HepG2 (cell line): ENCODE measurements at regions of chr1 and their contacts with region 1.

Region 1: DNA sequence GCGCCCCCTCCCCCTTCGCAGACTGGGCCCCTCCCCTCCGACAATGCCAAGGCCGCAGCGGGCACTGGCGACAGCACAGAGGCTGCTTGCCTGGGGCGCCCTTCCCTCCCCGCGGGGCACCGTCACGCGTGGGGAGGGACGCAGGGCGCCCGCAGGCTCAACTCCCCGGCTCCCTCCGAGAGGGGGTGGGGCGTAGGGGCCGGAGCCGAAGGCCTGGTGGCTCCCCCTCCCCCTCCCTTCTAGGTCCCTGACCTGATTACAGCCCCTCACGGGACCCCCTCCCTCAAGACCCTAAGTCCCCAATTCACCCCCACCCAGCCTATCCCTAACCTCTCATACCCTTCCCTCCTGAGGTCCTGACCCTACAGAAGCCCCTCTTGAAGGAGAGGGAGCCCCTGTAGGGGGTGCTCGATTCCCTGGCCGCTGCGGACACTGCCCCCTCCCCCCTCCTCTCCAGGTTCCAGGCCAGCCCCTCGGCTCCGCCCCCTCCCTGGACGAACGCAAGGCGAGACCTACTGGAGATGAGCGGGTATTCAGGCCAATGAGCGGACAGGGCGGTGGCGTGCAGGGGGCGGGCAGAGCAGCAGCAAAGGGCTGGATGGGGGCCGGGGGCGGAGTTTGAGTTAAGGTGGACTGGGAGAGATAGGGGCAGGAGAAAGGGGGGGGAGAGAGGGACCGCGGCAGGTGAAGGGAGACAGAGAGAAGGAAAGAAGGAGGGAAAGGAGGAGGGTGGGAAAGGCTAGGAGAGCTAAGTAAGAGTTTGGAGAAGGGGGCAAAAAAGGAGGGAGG is 733 bp upstream of the ZBTB7B start:
- DNase-seq: peak; percentile 97
- ATAC-seq: peak; percentile 70
- H3K4me3 ChIP-seq: peak overlapping the region; percentile 70 to 86 (median 84)
- H3K27ac ChIP-seq: peak overlapping the region; percentile 97
- H3K4me1 ChIP-seq: peaks cover 43% of the 10 kb centered on the region
- H3K27me3 ChIP-seq: no peaks in the 10 kb centered on the region; a peak in 1 of 5 replicates
- CTCF ChIP-seq: peak; percentile 71
- EP300 ChIP-seq: peak in 1 of 2 experiments; percentile 7; a peak in 1 of 4 replicates
- POLR2A ChIP-seq: no peak
- RAD21 ChIP-seq: no peak

Region 2: DNA sequence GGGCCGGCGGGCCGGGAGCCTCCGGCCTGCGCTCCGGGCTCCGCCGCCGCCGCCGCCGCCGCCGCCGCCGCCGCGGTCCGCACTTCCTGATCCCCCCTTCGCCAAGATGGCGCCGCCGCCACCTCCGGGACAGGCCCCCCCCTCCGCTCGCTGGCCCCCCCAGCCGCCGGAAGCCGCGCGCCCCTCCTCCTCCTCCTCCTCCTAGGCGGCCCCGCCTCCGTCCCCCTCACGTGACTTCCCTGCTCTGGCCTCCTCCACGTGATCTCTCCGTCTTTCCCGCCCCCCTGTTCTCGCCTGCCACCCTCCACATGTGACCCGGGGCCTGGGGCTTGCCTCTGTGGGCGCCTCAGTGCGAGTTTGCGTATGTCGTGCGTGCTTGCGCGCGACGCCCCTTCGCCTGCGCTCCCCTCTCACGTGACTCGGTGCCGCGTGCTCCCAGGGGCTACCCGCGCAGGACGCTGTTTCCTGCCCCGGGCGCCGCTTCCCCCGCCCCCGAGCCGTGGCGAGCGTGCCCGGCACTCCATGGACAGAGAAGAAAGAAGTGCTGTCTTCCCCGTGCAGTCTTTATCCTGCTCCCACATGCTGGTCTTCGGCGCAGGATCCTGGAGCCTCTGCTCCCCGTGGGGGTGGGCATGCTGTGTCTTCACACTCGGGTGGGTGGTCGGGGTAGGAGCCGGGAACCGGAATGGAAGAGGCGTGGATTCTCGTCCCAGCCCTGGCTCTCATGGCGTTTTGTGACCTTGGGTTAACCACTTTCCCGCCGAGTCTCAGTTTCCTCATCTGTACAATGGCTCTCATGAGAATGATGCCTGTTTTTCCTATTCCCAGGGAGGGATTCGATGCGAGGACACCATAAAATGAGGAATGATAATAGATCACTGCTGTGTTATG is 443.0 kb before region 1 on chr1 and contains the start of gene UBE2Q1:
- CTCF ChIA-PET with region 1: no interaction called
- POLR2A ChIA-PET with region 1: interaction called, 5 read pairs
- in situ Hi-C with region 1: no loop called
- intact Hi-C with region 1: loop called (anchors 5 kb)
- DNase-seq: peak; percentile 96
- ATAC-seq: peak; percentile 92
- H3K4me3 ChIP-seq: peak within 1 kb of the TSS; percentile 91 to 96 (median 95)
- H3K27ac ChIP-seq: peak within 1 kb of the TSS; percentile 76
- H3K4me1 ChIP-seq: peaks cover 34% of the 10 kb centered on the region
- H3K27me3 ChIP-seq: no peaks in the 10 kb centered on the region; a peak in 1 of 5 replicates
- CTCF ChIP-seq: 0 out of 2 replicates have a peak, but pooled peaks have one; percentile 19
- EP300 ChIP-seq: peak in 1 of 2 experiments; percentile 35; a peak in 1 of 4 replicates
- POLR2A ChIP-seq: peak; percentile 42 to 65; a peak in 3 of 4 replicates
- RAD21 ChIP-seq: 0 out of 2 replicates have a peak, but pooled peaks have one; percentile 30
- total RNA-seq, gene UBE2Q1: 37.9 and 41.7 TPM in 2 replicates

Region 3: GRCh38 chr1:154955718-154956543 is 45.9 kb before region 1 on chr1 and contains the start of gene PBXIP1:
- CTCF ChIA-PET with region 1: no interaction called
- POLR2A ChIA-PET with region 1: interaction called, 21 read pairs
- in situ Hi-C with region 1: loop called (anchors 5 kb)
- intact Hi-C with region 1: loop called (anchors 2 kb)
- DNase-seq: peak; percentile 94
- ATAC-seq: peak; percentile 81
- H3K4me3 ChIP-seq: peak within 1 kb of the TSS; percentile 66 to 72 (median 69)
- H3K27ac ChIP-seq: peak within 1 kb of the TSS; percentile 96
- H3K4me1 ChIP-seq: peaks cover 55% of the 10 kb centered on the region
- H3K27me3 ChIP-seq: no peaks in the 10 kb centered on the region; a peak in 1 of 5 replicates
- CTCF ChIP-seq: 0 out of 2 replicates have a peak, but pooled peaks have one; percentile 1
- EP300 ChIP-seq: no peak
- POLR2A ChIP-seq: peak in 1 of 2 experiments; percentile 55; a peak in 2 of 4 replicates
- RAD21 ChIP-seq: 0 out of 2 replicates have a peak, but pooled peaks have one; percentile 13
- total RNA-seq, gene PBXIP1: 7.3 and 16.3 TPM in 2 replicates

Region 4: DNA sequence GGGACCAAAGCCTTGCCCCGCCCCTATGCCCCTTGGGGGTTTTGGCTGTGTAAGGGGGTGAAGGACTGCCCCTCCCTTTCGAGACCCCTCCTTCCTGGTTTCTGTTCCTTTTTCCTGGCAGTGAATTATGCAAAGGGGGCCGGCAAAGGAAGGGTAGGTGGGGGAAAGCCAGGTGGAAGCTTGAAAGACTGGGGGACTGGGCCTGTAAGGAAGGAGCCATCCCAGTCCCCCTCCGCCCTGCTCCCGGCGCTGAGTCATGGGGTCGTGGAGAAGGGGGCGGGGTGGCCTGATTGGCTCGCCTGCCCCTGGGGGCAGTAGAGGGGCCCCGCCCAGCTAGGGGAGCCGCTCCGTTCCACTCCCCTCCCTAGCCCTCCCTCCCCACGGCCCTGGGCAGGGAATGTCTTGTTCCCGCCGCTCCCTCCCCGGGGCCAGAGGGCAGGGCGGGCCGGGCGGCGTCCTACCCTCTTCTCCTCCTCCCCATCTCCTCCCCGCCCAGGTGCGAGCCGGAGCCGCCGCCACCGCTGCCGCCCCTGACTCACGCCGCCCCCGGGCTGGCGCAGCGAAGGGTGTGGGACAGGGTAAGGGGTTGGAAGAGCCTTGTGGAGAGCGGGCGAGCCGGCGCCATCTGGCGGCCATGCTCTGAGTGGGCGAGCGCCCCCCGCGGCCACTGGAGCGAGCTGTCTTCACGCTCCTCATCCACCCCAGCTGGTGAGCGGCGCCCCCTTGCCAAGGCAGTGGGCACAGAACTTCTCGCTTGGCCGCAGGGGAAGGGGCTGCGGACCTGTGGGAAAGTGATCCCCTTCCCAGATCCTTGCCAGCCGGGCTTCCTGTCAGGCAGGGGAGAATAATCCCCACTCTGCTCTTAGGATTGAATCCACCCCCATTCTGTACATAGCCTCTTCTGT is 15.4 kb after region 1 on chr1:
- CTCF ChIA-PET with region 1: interaction called, 54 read pairs
- POLR2A ChIA-PET with region 1: interaction called, 90 read pairs
- in situ Hi-C with region 1: no loop called
- intact Hi-C with region 1: loop called (anchors 1 kb)
- DNase-seq: peak; percentile 88
- ATAC-seq: peak; percentile 88
- H3K4me3 ChIP-seq: peak overlapping the region in 2 of 3 experiments; percentile 48 to 61; a peak in 5 of 6 replicates
- H3K27ac ChIP-seq: peak overlapping the region; percentile 74
- H3K4me1 ChIP-seq: peaks cover 43% of the 10 kb centered on the region
- H3K27me3 ChIP-seq: no peaks in the 10 kb centered on the region
- CTCF ChIP-seq: peak; percentile 99
- EP300 ChIP-seq: peak in 1 of 2 experiments; percentile 20; a peak in 1 of 4 replicates
- POLR2A ChIP-seq: peak in 1 of 2 experiments; percentile 42; a peak in 1 of 4 replicates
- RAD21 ChIP-seq: peak; percentile 99

Region 5: GRCh38 chr1:155044812-155045690 is 43.2 kb after region 1 on chr1:
- CTCF ChIA-PET with region 1: no interaction called
- POLR2A ChIA-PET with region 1: interaction called, 10 read pairs
- in situ Hi-C with region 1: no loop called
- intact Hi-C with region 1: no loop called
- DNase-seq: peak; percentile 79
- ATAC-seq: peak; percentile 85
- H3K4me3 ChIP-seq: peak overlapping the region in 1 of 3 experiments; percentile 8; a peak in 1 of 6 replicates
- H3K27ac ChIP-seq: no peak overlapping the region
- H3K4me1 ChIP-seq: peaks cover 69% of the 10 kb centered on the region
- H3K27me3 ChIP-seq: peaks cover 7 to 21% of the 10 kb centered on the region in 2 experiments
- CTCF ChIP-seq: peak; percentile 89
- EP300 ChIP-seq: no peak
- POLR2A ChIP-seq: no peak
- RAD21 ChIP-seq: peak; percentile 81